ENCODE measurements at regions of chr3 and their contacts with region 1.

Region 1: DNA sequence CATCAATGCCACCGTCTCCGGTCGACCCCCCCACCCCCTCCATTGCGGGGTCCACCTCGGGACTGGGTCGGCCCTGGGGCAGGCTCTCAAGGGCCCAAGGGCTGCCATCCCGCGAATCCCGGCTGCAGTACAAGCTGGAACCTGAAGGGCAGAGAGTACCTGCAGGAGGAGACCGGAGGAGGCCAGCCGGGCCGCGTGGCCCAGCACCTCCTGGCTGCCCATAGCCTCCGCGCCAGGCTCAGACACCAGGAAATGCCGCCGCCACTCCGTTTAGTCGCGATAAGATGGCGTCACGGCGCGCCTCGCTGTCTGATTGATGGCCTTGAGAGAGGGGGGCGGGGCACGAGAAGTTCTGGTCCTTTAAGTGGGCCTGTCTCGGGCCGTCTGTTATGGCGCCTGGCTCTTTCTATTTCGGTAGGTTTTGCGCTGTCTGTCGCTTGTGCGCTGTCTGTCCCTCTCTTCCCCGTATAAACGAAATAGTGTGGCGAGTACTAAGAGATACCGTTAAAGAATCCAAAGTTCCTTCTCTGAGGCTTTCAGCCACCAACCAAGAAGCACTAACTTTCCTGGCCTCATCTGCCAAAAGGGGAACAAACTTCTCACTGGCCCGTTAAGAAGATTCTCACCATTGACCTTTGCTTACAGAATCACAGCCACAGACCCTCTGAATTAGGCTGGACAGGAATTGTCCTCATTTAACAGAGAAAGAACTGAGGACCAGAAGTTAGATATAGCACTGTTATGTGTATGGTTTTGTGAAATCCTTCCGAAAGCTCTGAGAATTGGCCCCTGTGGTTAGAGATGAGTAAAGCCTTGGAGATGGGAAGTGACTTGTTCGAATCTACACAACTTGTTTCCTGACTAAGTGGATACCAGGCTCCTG is at the start of gene RFT1:
- DNase-seq: peak; percentile 93 to 99 (median 96)

Region 2: GRCh38 chr3:53160660-53161449 is 30.4 kb after region 1 on chr3 and contains the start of gene PRKCD:
- intact Hi-C with region 1: loop called (anchors 2 kb)
- DNase-seq: peak; percentile 39 to 95 (median 67)

Measured in posterior cingulate gyrus (tissue), 11 donors.